ENCODE measurements at regions of chr4 and their contacts with region 1.

Region 1: GRCh38 chr4:27000820-27001219 is 140.2 kb downstream of the STIM2 start:
- DNase-seq: peak in 6 of 9 donors; percentile 15 to 44 (median 32)
- ATAC-seq: peak; percentile 86
- H3K4me3 ChIP-seq: no peak overlapping the region
- H3K4me3 Mint-ChIP-seq: no peak overlapping the region
- H3K27ac ChIP-seq: no peak overlapping the region
- H3K27ac Mint-ChIP-seq: peak overlapping the region in 8 of 9 donors; percentile 33 to 78 (median 62)
- H3K4me1 ChIP-seq: peaks cover 12 to 16% of the 10 kb centered on the region in 2 donors
- H3K4me1 Mint-ChIP-seq: peaks cover 19 to 65% (median 53%) of the 10 kb centered on the region in 7 donors
- H3K27me3 ChIP-seq: no peaks in the 10 kb centered on the region
- H3K27me3 Mint-ChIP-seq: no peaks in the 10 kb centered on the region

Region 2: DNA sequence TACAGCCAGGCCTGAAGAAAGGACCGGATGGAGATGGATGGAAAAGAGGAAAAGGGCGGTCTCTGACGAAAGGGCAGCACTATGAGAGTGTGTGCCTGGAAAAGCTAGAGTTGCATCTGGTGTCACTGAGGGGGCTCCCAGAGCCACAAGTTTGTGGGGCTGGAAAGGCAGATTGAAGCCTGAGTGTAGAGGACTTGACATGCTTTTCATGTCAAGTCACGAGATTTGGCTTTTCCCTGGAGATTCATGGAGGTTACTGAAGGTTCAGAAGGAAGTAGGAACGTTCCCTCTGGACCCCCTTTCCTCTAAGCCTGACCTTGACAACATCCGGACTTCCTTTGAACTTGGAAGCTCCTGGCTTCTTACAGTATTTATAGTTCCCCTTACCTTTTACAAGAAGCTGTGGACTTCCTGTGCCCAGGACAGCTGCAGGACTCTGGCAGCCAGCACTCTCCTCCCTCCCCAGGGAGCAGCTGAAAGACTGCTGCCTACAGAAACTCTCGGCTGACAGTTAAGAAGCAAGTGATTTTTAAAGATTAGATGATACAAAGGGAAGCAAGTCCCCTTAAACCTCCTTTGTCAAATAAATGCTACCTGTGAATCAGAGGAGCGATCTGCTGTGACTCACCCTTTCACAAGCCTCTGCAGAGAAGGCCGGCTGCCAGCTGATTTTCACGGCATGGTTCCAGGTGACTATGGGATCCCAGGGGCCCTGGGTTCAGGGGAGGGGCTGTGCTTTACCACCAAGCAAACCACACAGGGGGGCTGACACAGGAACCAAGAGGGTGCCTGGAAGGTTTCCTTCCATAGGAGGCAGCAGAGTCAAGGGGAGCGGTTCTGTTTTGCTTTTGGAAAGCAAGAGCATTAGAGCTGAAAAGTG is 213.1 kb before region 1 on chr4:
- CTCF ChIA-PET with region 1: interaction called, 3 read pairs
- POLR2A ChIA-PET with region 1: no interaction called
- intact Hi-C with region 1: loop called in 1 of 2 experiments (anchors 2 kb)
- DNase-seq: peak in 7 of 9 donors; percentile 5 to 43 (median 24)
- ATAC-seq: peak; percentile 60
- H3K4me3 ChIP-seq: no peak overlapping the region
- H3K4me3 Mint-ChIP-seq: no peak overlapping the region
- H3K27ac ChIP-seq: no peak overlapping the region
- H3K27ac Mint-ChIP-seq: peak overlapping the region in 5 of 9 donors; percentile 5 to 85 (median 33)
- H3K4me1 ChIP-seq: no peaks in the 10 kb centered on the region
- H3K4me1 Mint-ChIP-seq: peaks cover 0 to 14% (median 10%) of the 10 kb centered on the region in 7 donors
- H3K27me3 ChIP-seq: no peaks in the 10 kb centered on the region
- H3K27me3 Mint-ChIP-seq: peaks cover 0 to 4% (median 0%) of the 10 kb centered on the region in 5 donors

Region 3: GRCh38 chr4:26896636-26897035 is 104.2 kb before region 1 on chr4:
- CTCF ChIA-PET with region 1: no interaction called
- POLR2A ChIA-PET with region 1: no interaction called
- intact Hi-C with region 1: no loop called
- DNase-seq: no peak
- ATAC-seq: no peak
- H3K4me3 ChIP-seq: no peak overlapping the region
- H3K4me3 Mint-ChIP-seq: peak overlapping the region in 2 of 10 donors; percentile 1 to 15
- H3K27ac ChIP-seq: no peak overlapping the region
- H3K27ac Mint-ChIP-seq: peak overlapping the region in 3 of 9 donors; percentile 32 to 47 (median 40)
- H3K4me1 ChIP-seq: peaks cover 7 to 23% of the 10 kb centered on the region in 2 donors
- H3K4me1 Mint-ChIP-seq: peaks cover 42 to 87% (median 82%) of the 10 kb centered on the region in 7 donors
- H3K27me3 ChIP-seq: no peaks in the 10 kb centered on the region
- H3K27me3 Mint-ChIP-seq: no peaks in the 10 kb centered on the region

Region 4: DNA sequence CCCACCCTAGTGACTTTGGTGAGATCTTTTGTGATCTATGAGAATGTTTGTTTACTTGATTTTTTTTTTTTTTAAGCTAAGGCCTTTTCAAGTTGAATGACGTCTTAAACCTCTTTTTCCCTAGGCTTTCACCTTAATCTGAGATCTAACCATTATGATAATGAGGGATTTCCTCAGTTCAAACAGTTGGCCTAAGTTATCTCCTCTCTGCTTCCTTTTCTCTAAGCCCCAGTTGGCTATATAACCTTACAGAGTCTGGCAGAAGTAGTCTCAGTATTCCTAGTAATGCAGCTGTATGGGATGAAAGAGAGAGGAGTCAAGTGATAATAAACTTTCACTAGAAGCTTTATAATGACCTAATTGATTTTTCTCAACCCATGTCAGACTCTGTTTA is 41.2 kb before region 1 on chr4:
- CTCF ChIA-PET with region 1: no interaction called
- POLR2A ChIA-PET with region 1: no interaction called
- intact Hi-C with region 1: loop called in 1 of 2 experiments (anchors 5 kb)
- DNase-seq: peak in 1 of 9 donors; percentile 12
- ATAC-seq: peak; percentile 52
- H3K4me3 ChIP-seq: no peak overlapping the region
- H3K4me3 Mint-ChIP-seq: peak overlapping the region in 5 of 10 donors; percentile 0 to 42 (median 4)
- H3K27ac ChIP-seq: no peak overlapping the region
- H3K27ac Mint-ChIP-seq: peak overlapping the region in 5 of 9 donors; percentile 14 to 67 (median 38)
- H3K4me1 ChIP-seq: peaks cover 0 to 11% of the 10 kb centered on the region in 2 donors
- H3K4me1 Mint-ChIP-seq: peaks cover 24 to 83% (median 71%) of the 10 kb centered on the region in 7 donors
- H3K27me3 ChIP-seq: no peaks in the 10 kb centered on the region
- H3K27me3 Mint-ChIP-seq: no peaks in the 10 kb centered on the region

Region 5: GRCh38 chr4:26985873-26986272 is 14.9 kb before region 1 on chr4:
- CTCF ChIA-PET with region 1: interaction called, 3 read pairs
- POLR2A ChIA-PET with region 1: no interaction called
- intact Hi-C with region 1: loop called in 1 of 2 experiments (anchors 2 kb)
- DNase-seq: peak in 8 of 9 donors; percentile 33 to 71 (median 59)
- ATAC-seq: peak; percentile 95
- H3K4me3 ChIP-seq: peak overlapping the region; percentile 11
- H3K4me3 Mint-ChIP-seq: peak overlapping the region in 9 of 10 donors; percentile 19 to 72 (median 63)
- H3K27ac ChIP-seq: no peak overlapping the region
- H3K27ac Mint-ChIP-seq: peak overlapping the region in 6 of 9 donors; percentile 2 to 39 (median 10)
- H3K4me1 ChIP-seq: peaks cover 8 to 22% of the 10 kb centered on the region in 2 donors
- H3K4me1 Mint-ChIP-seq: peaks cover 19 to 78% (median 72%) of the 10 kb centered on the region in 7 donors
- H3K27me3 ChIP-seq: no peaks in the 10 kb centered on the region
- H3K27me3 Mint-ChIP-seq: no peaks in the 10 kb centered on the region